BJ (cell line): ENCODE measurements at regions of chr4 and their contacts with region 1.

Region 1: GRCh38 chr4:121484633-121485032 is 103.8 kb upstream of the QRFPR start:
- DNase-seq: no peak
- H3K4me3 ChIP-seq: no peak overlapping the region
- H3K27me3 ChIP-seq: no peaks in the 10 kb centered on the region
- CTCF ChIP-seq: peak; percentile 90

Region 2: GRCh38 chr4:121454251-121454979 is 30.2 kb before region 1 on chr4:
- CTCF ChIA-PET with region 1: no interaction called
- POLR2A ChIA-PET with region 1: no interaction called
- DNase-seq: no peak
- H3K4me3 ChIP-seq: no peak overlapping the region
- H3K27me3 ChIP-seq: peaks cover 8% of the 10 kb centered on the region; the same call in 1 of the 2 replicates
- CTCF ChIP-seq: no peak

Region 3: GRCh38 chr4:121534187-121534586 is 49.6 kb after region 1 on chr4:
- CTCF ChIA-PET with region 1: no interaction called
- POLR2A ChIA-PET with region 1: no interaction called
- DNase-seq: no peak
- H3K4me3 ChIP-seq: no peak overlapping the region
- H3K27me3 ChIP-seq: no peaks in the 10 kb centered on the region
- CTCF ChIP-seq: no peak

Region 4: GRCh38 chr4:121656269-121656641 is 171.6 kb after region 1 on chr4:
- CTCF ChIA-PET with region 1: interaction called, 38 read pairs
- POLR2A ChIA-PET with region 1: no interaction called
- DNase-seq: no peak
- H3K4me3 ChIP-seq: no peak overlapping the region
- H3K27me3 ChIP-seq: no peaks in the 10 kb centered on the region
- CTCF ChIP-seq: peak; percentile 56

Region 5: GRCh38 chr4:121800961-121801714 is 316.5 kb after region 1 on chr4 and contains the start of gene EXOSC9:
- CTCF ChIA-PET with region 1: no interaction called
- POLR2A ChIA-PET with region 1: no interaction called
- DNase-seq: peak; percentile 60
- H3K4me3 ChIP-seq: peak within 1 kb of the TSS; percentile 72
- H3K27me3 ChIP-seq: no peaks in the 10 kb centered on the region
- CTCF ChIP-seq: no peak
- polyA plus RNA-seq, gene EXOSC9: 14.3 and 21.8 TPM in 2 replicates